IMR-90 (cell line): ENCODE measurements at regions of chr6 and their contacts with region 1.

Region 1: DNA sequence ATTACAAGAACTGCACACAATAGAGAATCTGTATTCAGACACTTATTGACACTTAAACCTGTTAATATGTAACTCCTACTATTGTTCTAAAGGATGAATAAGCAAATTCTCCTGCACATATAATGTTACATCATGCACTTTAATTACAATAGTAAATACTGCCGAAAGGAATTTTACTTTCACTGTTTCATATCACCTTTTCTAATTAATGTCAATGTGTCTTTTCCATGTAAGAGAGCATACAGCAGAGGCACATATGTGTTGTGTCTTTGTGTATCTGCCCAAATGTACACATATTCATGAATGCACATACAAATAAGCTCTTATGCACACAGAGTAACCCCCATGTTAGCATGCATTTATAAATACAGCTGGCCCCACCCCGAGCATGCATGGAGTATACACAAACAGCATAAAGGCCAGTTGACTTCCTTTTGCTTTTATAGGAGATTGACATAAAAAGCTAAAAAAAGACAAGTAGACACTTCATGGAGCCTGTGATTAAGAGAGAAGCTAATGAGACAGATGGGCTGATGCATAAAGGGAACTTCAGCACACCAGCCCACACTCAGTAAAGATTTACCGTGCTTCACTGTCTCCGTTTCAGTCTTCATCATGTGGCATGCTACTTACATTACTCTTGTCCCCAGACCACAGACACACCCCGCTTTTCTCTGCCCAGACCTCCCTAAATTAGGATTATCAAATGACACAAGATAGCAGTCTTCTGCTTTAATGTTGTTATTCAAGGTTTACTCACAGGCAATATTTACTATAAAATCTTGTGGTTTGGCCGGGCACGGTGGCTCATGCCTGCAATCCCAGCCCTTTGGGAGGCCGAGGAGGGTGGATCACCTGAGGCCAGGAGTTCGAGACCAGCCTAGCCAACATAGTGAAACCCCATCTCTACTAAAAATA is 184.6 kb downstream of the ATXN1 start:
- DNase-seq: no peak
- ATAC-seq: no peak
- H3K4me3 ChIP-seq: no peak overlapping the region
- H3K27ac ChIP-seq: no peak overlapping the region
- H3K4me1 ChIP-seq: peaks cover 4% of the 10 kb centered on the region
- H3K27me3 ChIP-seq: no peaks in the 10 kb centered on the region
- CTCF ChIP-seq: no peak
- POLR2A ChIP-seq: no peak
- RAD21 ChIP-seq: no peak

Region 2: GRCh38 chr6:16273256-16273655 is 303.5 kb before region 1 on chr6:
- CTCF ChIA-PET with region 1: no interaction called
- POLR2A ChIA-PET with region 1: no interaction called
- dilution Hi-C with region 1: no loop called
- in situ Hi-C with region 1: no loop called
- intact Hi-C with region 1: no loop called
- DNase-seq: peak; percentile 61
- ATAC-seq: peak; percentile 31
- H3K4me3 ChIP-seq: no peak overlapping the region
- H3K27ac ChIP-seq: no peak overlapping the region
- H3K4me1 ChIP-seq: peaks cover 14% of the 10 kb centered on the region
- H3K27me3 ChIP-seq: no peaks in the 10 kb centered on the region
- CTCF ChIP-seq: no peak
- POLR2A ChIP-seq: no peak
- RAD21 ChIP-seq: no peak

Region 3: GRCh38 chr6:16548121-16548520 is 28.6 kb before region 1 on chr6:
- CTCF ChIA-PET with region 1: no interaction called
- POLR2A ChIA-PET with region 1: no interaction called
- dilution Hi-C with region 1: no loop called
- in situ Hi-C with region 1: no loop called
- intact Hi-C with region 1: no loop called
- DNase-seq: peak; percentile 74
- ATAC-seq: peak; percentile 71
- H3K4me3 ChIP-seq: no peak overlapping the region
- H3K27ac ChIP-seq: no peak overlapping the region
- H3K4me1 ChIP-seq: peaks cover 3% of the 10 kb centered on the region
- H3K27me3 ChIP-seq: no peaks in the 10 kb centered on the region
- CTCF ChIP-seq: no peak
- POLR2A ChIP-seq: no peak
- RAD21 ChIP-seq: no peak

Region 4: GRCh38 chr6:16608444-16608843 is 31.7 kb after region 1 on chr6:
- CTCF ChIA-PET with region 1: no interaction called
- POLR2A ChIA-PET with region 1: no interaction called
- dilution Hi-C with region 1: no loop called
- in situ Hi-C with region 1: no loop called
- intact Hi-C with region 1: loop called (anchors 2 kb)
- DNase-seq: no peak
- ATAC-seq: no peak
- H3K4me3 ChIP-seq: no peak overlapping the region
- H3K27ac ChIP-seq: no peak overlapping the region
- H3K4me1 ChIP-seq: no peaks in the 10 kb centered on the region
- H3K27me3 ChIP-seq: no peaks in the 10 kb centered on the region
- CTCF ChIP-seq: no peak
- POLR2A ChIP-seq: no peak
- RAD21 ChIP-seq: no peak